CD8-positive, alpha-beta memory T cell (primary cell): ENCODE measurements at regions of chr20 and their contacts with region 1.

Region 1: GRCh38 chr20:44310664-44311639 is at the start of gene FITM2:
- DNase-seq: peak; percentile 97 to 99 (median 98)
- H3K4me3 ChIP-seq: peak within 1 kb of the TSS; percentile 89
- H3K4me3 Mint-ChIP-seq: peak within 1 kb of the TSS; percentile 91 to 97 (median 95)
- H3K27ac ChIP-seq: peak within 1 kb of the TSS; percentile 61
- H3K27ac Mint-ChIP-seq: peak within 1 kb of the TSS; percentile 83 to 94 (median 90)
- H3K4me1 ChIP-seq: peaks cover 14% of the 10 kb centered on the region
- H3K4me1 Mint-ChIP-seq: peaks cover 26 to 33% (median 26%) of the 10 kb centered on the region in 3 donors
- H3K27me3 ChIP-seq: no peaks in the 10 kb centered on the region
- H3K27me3 Mint-ChIP-seq: peaks cover 0 to 4% of the 10 kb centered on the region in 2 donors
- total RNA-seq, gene FITM2: 2.4 to 2.5 TPM

Region 2: DNA sequence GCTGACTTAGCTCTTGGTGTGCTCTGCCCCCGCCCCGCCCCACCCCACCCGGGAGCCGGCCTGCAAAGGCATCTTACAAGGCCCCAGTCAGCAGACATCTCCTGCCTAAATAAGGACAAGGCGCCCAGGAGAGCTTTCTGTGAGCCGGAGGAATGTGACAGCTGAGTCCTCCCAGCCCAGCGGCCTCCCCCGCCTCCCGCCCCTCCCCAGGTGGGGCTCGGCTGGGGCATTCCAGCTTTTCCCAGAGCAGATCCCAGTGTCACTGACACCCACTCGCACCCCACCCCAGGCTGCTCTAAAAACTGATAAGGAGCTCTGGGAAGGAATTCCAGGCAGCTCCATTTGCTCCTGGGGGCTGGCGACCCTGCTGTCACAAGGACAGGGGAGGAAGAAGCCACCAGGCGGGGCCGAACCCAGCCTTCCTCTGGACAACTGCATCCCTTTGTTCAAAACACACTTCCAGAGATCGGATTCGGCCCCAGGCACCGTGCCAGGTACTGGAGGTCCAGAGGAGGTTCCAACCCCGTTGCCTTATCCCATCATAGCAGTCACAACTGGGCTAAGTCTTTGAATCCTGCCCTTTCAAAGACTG is 173.6 kb before region 1 on chr20:
- CTCF ChIA-PET with region 1: no interaction called
- POLR2A ChIA-PET with region 1: no interaction called
- DNase-seq: no peak
- H3K4me3 ChIP-seq: no peak overlapping the region
- H3K4me3 Mint-ChIP-seq: no peak overlapping the region
- H3K27ac ChIP-seq: no peak overlapping the region
- H3K27ac Mint-ChIP-seq: no peak overlapping the region
- H3K4me1 ChIP-seq: no peaks in the 10 kb centered on the region
- H3K4me1 Mint-ChIP-seq: no peaks in the 10 kb centered on the region
- H3K27me3 ChIP-seq: no peaks in the 10 kb centered on the region
- H3K27me3 Mint-ChIP-seq: peaks cover 16 to 20% of the 10 kb centered on the region in 2 donors

Region 3: DNA sequence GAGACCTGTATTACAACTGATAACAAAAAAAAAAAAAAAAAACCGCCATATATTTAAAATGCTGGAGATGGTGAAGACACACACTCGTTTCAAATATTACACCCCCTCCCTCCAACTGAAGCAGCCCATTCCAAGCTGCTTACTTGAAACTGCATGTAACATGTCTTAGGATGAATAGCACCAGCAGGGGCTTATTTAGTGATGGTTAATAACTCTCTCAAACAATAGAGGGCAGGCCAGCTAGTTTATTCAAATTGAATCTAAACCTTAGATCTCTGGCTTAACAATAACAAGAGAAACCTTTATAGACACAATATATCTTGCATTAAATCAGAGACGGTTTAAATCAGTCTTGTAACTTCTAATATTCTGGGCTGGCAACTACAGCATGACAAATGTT is 114.7 kb before region 1 on chr20:
- CTCF ChIA-PET with region 1: interaction called, 10 read pairs
- POLR2A ChIA-PET with region 1: no interaction called
- DNase-seq: no peak
- H3K4me3 ChIP-seq: no peak overlapping the region
- H3K4me3 Mint-ChIP-seq: no peak overlapping the region
- H3K27ac ChIP-seq: no peak overlapping the region
- H3K27ac Mint-ChIP-seq: peak overlapping the region in 1 of 8 donors; percentile 50
- H3K4me1 ChIP-seq: peaks cover 5% of the 10 kb centered on the region
- H3K4me1 Mint-ChIP-seq: peaks cover 17 to 27% (median 23%) of the 10 kb centered on the region in 3 donors
- H3K27me3 ChIP-seq: no peaks in the 10 kb centered on the region
- H3K27me3 Mint-ChIP-seq: peaks cover 0 to 2% of the 10 kb centered on the region in 2 donors

Region 4: DNA sequence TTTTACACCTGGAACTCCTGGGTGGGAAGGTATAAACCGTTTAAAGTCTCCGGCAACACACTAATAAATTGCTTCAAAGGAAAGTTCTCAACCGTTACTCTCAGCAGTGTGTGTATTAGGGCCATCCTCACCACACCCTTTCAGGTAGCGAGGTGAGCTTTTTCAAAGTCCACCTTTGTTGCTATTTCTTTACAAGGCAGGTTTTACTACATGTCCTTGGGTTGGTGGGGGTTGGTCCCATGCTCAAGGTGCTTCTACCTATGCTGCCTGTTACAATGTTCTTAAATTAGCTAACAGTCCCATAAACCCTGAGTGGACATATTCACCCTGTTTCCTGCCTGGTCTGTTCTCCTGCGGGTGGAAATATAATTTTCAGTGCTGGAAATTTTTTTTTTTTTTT is 87.2 kb before region 1 on chr20:
- CTCF ChIA-PET with region 1: interaction called, 396 read pairs
- POLR2A ChIA-PET with region 1: interaction called, 11 read pairs
- DNase-seq: no peak
- H3K4me3 ChIP-seq: no peak overlapping the region
- H3K4me3 Mint-ChIP-seq: no peak overlapping the region
- H3K27ac ChIP-seq: no peak overlapping the region
- H3K27ac Mint-ChIP-seq: peak overlapping the region in 3 of 8 donors; percentile 17 to 61 (median 55)
- H3K4me1 ChIP-seq: peaks cover 17% of the 10 kb centered on the region
- H3K4me1 Mint-ChIP-seq: peaks cover 26 to 31% (median 29%) of the 10 kb centered on the region in 3 donors
- H3K27me3 ChIP-seq: no peaks in the 10 kb centered on the region
- H3K27me3 Mint-ChIP-seq: no peaks in the 10 kb centered on the region

Region 5: GRCh38 chr20:44326391-44327159 is 15.6 kb after region 1 on chr20:
- CTCF ChIA-PET with region 1: interaction called, 12 read pairs
- POLR2A ChIA-PET with region 1: no interaction called
- DNase-seq: peak in 1 of 5 donors; percentile 19
- H3K4me3 ChIP-seq: no peak overlapping the region
- H3K4me3 Mint-ChIP-seq: peak overlapping the region in 4 of 7 donors; percentile 19 to 45 (median 38)
- H3K27ac ChIP-seq: no peak overlapping the region
- H3K27ac Mint-ChIP-seq: no peak overlapping the region
- H3K4me1 ChIP-seq: no peaks in the 10 kb centered on the region
- H3K4me1 Mint-ChIP-seq: no peaks in the 10 kb centered on the region
- H3K27me3 ChIP-seq: no peaks in the 10 kb centered on the region
- H3K27me3 Mint-ChIP-seq: peaks cover 4 to 23% of the 10 kb centered on the region in 2 donors